ENCODE measurements at regions of chr10 and their contacts with region 1.

Region 1: GRCh38 chr10:60208676-60209269 is 180.9 kb downstream of the ANK3 start:
- DNase-seq: no peak
- ATAC-seq: peak; percentile 57 to 63
- H3K4me3 ChIP-seq: no peak overlapping the region
- H3K27ac ChIP-seq: no peak overlapping the region
- H3K4me1 ChIP-seq: peaks cover 4% of the 10 kb centered on the region in 2 donors
- H3K27me3 ChIP-seq: no peaks in the 10 kb centered on the region
- CTCF ChIP-seq: peak; percentile 53 to 88 (median 71)
- POLR2A ChIP-seq: no peak

Region 2: GRCh38 chr10:60434418-60435046 is 225.8 kb after region 1 on chr10:
- in situ Hi-C with region 1: loop called in 1 of 4 experiments (anchors 10 kb)
- intact Hi-C with region 1: no loop called
- DNase-seq: no peak
- ATAC-seq: no peak
- H3K4me3 ChIP-seq: no peak overlapping the region
- H3K27ac ChIP-seq: no peak overlapping the region
- H3K4me1 ChIP-seq: peaks cover 0 to 5% of the 10 kb centered on the region in 2 donors
- H3K27me3 ChIP-seq: no peaks in the 10 kb centered on the region
- CTCF ChIP-seq: peak in 4 of 5 experiments; percentile 54 to 61 (median 60)
- POLR2A ChIP-seq: no peak